Colonic mucosa (tissue), 4 donors: ENCODE measurements at regions of chr17 and their contacts with region 1.

Region 1: GRCh38 chr17:21043286-21044232 is 748 bp upstream of the USP22 start:
- DNase-seq: peak; percentile 98
- H3K4me3 ChIP-seq: peak overlapping the region; percentile 58
- H3K27ac ChIP-seq: peak overlapping the region; percentile 100
- H3K4me1 ChIP-seq: peaks cover 4% of the 10 kb centered on the region
- H3K27me3 ChIP-seq: no peaks in the 10 kb centered on the region
- CTCF ChIP-seq: peak; percentile 91

Region 2: GRCh38 chr17:21098934-21099689 is 55.6 kb after region 1 on chr17:
- intact Hi-C with region 1: loop called (anchors 10 kb)
- DNase-seq: peak; percentile 83
- H3K4me3 ChIP-seq: peak overlapping the region; percentile 45
- H3K27ac ChIP-seq: no peak overlapping the region
- H3K4me1 ChIP-seq: no peaks in the 10 kb centered on the region
- H3K27me3 ChIP-seq: no peaks in the 10 kb centered on the region
- CTCF ChIP-seq: no peak

Region 3: DNA sequence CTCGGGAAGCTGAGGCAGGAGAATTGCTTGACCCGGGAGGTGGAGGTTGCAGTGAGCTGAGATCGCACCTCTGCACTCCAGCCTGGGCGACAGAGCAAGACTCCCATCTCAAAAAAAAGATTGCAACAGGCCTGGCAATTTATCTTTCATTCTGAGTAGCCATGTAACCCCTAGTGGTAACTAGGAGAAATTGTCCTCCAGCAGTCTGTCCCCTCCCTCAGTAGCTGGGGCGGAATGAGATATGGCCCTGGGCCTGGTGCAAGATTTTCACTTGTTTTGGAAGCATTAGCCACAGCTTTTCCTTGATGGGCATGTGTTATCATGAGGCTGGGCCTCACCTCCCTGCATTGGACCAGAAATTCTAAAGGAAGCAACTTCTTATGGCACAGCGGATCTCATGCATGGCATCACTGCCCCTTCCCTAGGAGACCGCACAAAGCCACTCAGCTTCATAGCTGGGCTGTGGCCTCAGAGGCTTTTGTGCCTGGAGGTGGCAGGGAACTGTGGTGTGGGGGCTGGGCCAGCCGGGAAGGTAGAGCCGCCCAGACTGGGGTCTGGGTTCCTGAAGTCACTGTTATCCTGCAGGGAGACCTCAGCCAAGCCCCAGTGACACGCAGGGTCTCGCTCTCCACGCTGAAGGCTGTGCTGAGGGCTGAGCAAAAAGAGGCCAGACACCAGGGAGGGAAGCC is 196.3 kb after region 1 on chr17:
- intact Hi-C with region 1: no loop called
- DNase-seq: no peak
- H3K4me3 ChIP-seq: no peak overlapping the region
- H3K27ac ChIP-seq: no peak overlapping the region
- H3K4me1 ChIP-seq: no peaks in the 10 kb centered on the region
- H3K27me3 ChIP-seq: no peaks in the 10 kb centered on the region
- CTCF ChIP-seq: peak; percentile 30